Caco-2 (cell line): ENCODE measurements at regions of chr6 and their contacts with region 1.

Region 1: DNA sequence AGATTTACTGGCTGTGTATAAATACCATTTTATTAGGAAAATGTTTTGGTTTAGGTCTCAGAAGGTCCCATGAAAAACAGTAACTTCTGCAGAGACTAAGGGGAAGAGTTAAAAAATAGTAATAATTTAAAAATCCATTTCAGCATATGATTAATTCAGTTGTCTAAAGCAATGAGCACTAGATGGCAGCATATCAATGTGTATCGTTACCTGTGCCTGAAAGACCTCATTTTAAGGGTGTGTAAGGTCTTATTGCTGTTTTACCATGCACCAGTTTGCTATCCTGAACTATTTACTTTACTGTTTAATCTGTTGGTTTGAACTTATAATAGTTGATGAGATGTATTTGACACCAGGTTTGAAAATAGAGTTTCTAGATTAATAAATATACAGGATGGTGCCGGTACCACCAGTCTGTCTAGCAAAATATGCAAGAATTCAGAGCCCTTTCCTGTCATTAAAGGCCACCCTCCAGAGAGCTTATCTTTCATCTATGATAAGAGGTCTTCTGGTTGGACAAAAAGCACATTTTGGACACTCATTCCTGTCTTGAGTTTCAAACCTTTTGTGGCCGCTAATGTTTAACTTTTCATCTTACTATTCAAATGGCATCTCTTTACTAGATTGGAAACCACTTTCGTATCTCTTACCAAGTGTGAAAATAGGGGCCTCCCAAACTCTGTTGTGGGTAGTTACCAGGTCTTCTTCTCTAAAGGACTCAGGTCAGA is 8.9 kb upstream of the AHI1 start:
- DNase-seq: peak in 1 of 2 experiments; percentile 35
- H3K4me3 ChIP-seq: no peak overlapping the region
- H3K4me3 Mint-ChIP-seq: peak overlapping the region; percentile 9
- H3K27ac Mint-ChIP-seq: peak overlapping the region; percentile 65
- H3K4me1 ChIP-seq: peaks cover 24% of the 10 kb centered on the region
- H3K4me1 Mint-ChIP-seq: peaks cover 18% of the 10 kb centered on the region
- H3K27me3 ChIP-seq: no peaks in the 10 kb centered on the region
- H3K27me3 Mint-ChIP-seq: no peaks in the 10 kb centered on the region
- CTCF ChIP-seq: peak; percentile 19 to 57

Region 2: GRCh38 chr6:135224037-135224647 is 282.3 kb before region 1 on chr6:
- CTCF ChIA-PET with region 1: no interaction called
- POLR2A ChIA-PET with region 1: no interaction called
- intact Hi-C with region 1: no loop called
- DNase-seq: no peak
- H3K4me3 ChIP-seq: no peak overlapping the region
- H3K4me3 Mint-ChIP-seq: peak overlapping the region; percentile 5
- H3K27ac Mint-ChIP-seq: no peak overlapping the region
- H3K4me1 ChIP-seq: 0 out of 2 replicates have a peak, but pooled peaks cover 7% of the 10 kb centered on the region
- H3K4me1 Mint-ChIP-seq: peaks cover 14% of the 10 kb centered on the region
- H3K27me3 ChIP-seq: no peaks in the 10 kb centered on the region
- H3K27me3 Mint-ChIP-seq: no peaks in the 10 kb centered on the region
- CTCF ChIP-seq: no peak

Region 3: GRCh38 chr6:135314543-135314942 is 191.9 kb before region 1 on chr6:
- CTCF ChIA-PET with region 1: no interaction called
- POLR2A ChIA-PET with region 1: no interaction called
- intact Hi-C with region 1: no loop called
- DNase-seq: no peak
- H3K4me3 ChIP-seq: no peak overlapping the region
- H3K4me3 Mint-ChIP-seq: no peak overlapping the region
- H3K27ac Mint-ChIP-seq: no peak overlapping the region
- H3K4me1 ChIP-seq: no peaks in the 10 kb centered on the region
- H3K4me1 Mint-ChIP-seq: no peaks in the 10 kb centered on the region
- H3K27me3 ChIP-seq: no peaks in the 10 kb centered on the region
- H3K27me3 Mint-ChIP-seq: no peaks in the 10 kb centered on the region
- CTCF ChIP-seq: no peak

Region 4: DNA sequence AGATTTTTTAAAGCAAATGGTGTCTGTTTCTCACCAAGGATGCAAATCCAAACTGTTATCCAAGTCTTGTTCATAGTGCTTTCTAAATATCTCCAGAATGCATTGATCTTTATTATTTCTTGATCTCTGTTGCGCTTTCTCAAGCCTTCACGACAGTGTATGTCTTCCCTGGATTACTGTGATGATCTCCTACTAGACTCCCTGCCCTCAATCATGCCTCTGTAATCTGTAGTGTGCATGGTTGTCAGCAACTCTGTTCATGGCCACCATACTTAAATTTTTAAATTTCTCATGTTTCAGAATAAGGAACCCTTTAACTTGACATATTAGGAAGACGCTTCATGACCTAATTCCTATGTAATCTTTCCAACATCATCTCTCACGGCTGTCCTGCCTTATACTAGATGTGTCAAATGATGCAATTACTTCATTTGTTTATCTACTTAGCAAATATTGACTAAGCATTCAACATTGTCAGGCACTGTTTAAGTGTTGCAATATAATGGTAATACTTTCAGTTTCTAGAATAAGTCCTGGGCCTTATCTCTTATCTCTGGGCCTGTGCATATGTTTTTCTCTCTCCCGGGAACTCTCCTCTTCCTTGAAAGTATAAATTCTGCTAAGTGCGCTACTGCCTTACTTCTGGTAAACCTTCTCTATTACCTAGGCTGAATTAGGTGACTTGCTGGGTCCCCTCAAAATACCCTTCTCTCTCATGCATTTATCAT is 16.7 kb after region 1 on chr6:
- CTCF ChIA-PET with region 1: no interaction called
- POLR2A ChIA-PET with region 1: no interaction called
- intact Hi-C with region 1: loop called (anchors 1 kb)
- DNase-seq: peak in 1 of 2 experiments; percentile 39
- H3K4me3 ChIP-seq: no peak overlapping the region
- H3K4me3 Mint-ChIP-seq: peak overlapping the region; percentile 6
- H3K27ac Mint-ChIP-seq: no peak overlapping the region
- H3K4me1 ChIP-seq: peaks cover 13% of the 10 kb centered on the region
- H3K4me1 Mint-ChIP-seq: peaks cover 10% of the 10 kb centered on the region
- H3K27me3 ChIP-seq: no peaks in the 10 kb centered on the region
- H3K27me3 Mint-ChIP-seq: peaks cover 3% of the 10 kb centered on the region
- CTCF ChIP-seq: no peak

Region 5: DNA sequence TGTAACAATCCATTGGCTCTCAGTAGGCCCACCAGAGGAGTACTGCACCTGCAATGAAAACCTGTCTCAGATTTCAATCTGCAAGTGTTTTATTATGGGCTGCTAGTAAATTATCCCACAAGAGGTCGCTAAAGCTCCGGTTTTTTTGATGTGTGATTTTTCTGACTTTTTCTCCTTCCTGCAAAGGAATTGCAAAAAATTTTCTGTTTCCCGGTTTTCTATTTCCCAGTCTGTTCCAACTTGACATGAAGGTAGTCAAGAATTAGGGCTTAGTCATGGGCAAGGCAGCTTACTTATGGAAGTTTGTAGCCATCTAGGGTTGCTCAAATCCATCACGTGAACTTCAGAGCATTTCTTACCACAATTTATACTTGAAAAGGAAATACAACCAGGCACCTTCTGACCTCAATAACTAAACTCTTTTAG is 29.6 kb after region 1 on chr6:
- CTCF ChIA-PET with region 1: no interaction called
- POLR2A ChIA-PET with region 1: no interaction called
- intact Hi-C with region 1: loop called (anchors 1 kb)
- DNase-seq: peak in 1 of 2 experiments; percentile 22
- H3K4me3 ChIP-seq: no peak overlapping the region
- H3K4me3 Mint-ChIP-seq: no peak overlapping the region
- H3K27ac Mint-ChIP-seq: no peak overlapping the region
- H3K4me1 ChIP-seq: no peaks in the 10 kb centered on the region
- H3K4me1 Mint-ChIP-seq: no peaks in the 10 kb centered on the region
- H3K27me3 ChIP-seq: no peaks in the 10 kb centered on the region
- H3K27me3 Mint-ChIP-seq: peaks cover 6% of the 10 kb centered on the region
- CTCF ChIP-seq: peak; percentile 57 to 62

Region 6: GRCh38 chr6:135759831-135760230 is 253.4 kb after region 1 on chr6:
- CTCF ChIA-PET with region 1: no interaction called
- POLR2A ChIA-PET with region 1: no interaction called
- intact Hi-C with region 1: loop called (anchors 2 kb)
- DNase-seq: peak in 1 of 2 experiments; percentile 21
- H3K4me3 ChIP-seq: no peak overlapping the region
- H3K4me3 Mint-ChIP-seq: no peak overlapping the region
- H3K27ac Mint-ChIP-seq: no peak overlapping the region
- H3K4me1 ChIP-seq: no peaks in the 10 kb centered on the region
- H3K4me1 Mint-ChIP-seq: no peaks in the 10 kb centered on the region
- H3K27me3 ChIP-seq: no peaks in the 10 kb centered on the region
- H3K27me3 Mint-ChIP-seq: peaks cover under 1% of the 10 kb centered on the region
- CTCF ChIP-seq: peak in 1 of 2 experiments; percentile 31

Region 7: GRCh38 chr6:136317021-136317694 is 810.7 kb after region 1 on chr6:
- CTCF ChIA-PET with region 1: no interaction called
- POLR2A ChIA-PET with region 1: no interaction called
- intact Hi-C with region 1: loop called (anchors 5 kb)
- DNase-seq: peak; percentile 52 to 71
- H3K4me3 ChIP-seq: no peak overlapping the region
- H3K4me3 Mint-ChIP-seq: no peak overlapping the region
- H3K27ac Mint-ChIP-seq: no peak overlapping the region
- H3K4me1 ChIP-seq: no peaks in the 10 kb centered on the region
- H3K4me1 Mint-ChIP-seq: no peaks in the 10 kb centered on the region
- H3K27me3 ChIP-seq: no peaks in the 10 kb centered on the region
- H3K27me3 Mint-ChIP-seq: no peaks in the 10 kb centered on the region
- CTCF ChIP-seq: peak; percentile 75 to 79